ENCODE measurements at regions of chr16 and their contacts with region 1.

Region 1: GRCh38 chr16:27367461-27368357 is 34.3 kb upstream of the IL21R start:
- DNase-seq: peak in 9 of 10 donors; percentile 42 to 74 (median 57)
- H3K4me3 ChIP-seq: peak overlapping the region in 44 of 59 donors; percentile 6 to 52 (median 26)
- H3K27ac ChIP-seq: peak overlapping the region in 9 of 59 donors; percentile 13 to 58 (median 27)
- H3K27me3 ChIP-seq: no peaks in the 10 kb centered on the region
- CTCF ChIP-seq: peak; percentile 36 to 89 (median 76)

Region 2: DNA sequence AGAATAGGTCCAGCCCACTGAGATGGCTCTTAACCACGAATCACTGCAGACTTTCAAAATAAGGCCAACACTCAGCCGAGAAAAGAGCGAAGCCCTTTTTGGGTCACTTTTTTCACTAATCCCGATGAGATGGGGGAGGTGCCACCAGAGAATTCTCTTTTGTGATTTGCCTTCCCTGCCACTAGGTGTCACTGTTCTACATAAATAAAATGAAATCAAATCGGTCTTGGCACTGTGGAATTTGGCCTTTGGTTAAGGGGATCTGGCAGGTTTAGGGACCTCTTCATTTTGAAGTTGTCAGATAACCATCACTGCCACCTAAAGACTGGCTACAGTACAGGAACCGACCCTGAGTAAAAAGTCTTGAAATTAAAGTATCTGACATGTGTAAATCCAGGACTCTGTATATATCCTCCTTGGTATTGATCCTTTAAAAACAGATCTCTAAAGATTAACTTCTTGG is 1529.0 kb before region 1 on chr16:
- intact Hi-C with region 1: loop called in 1 of 2 experiments (anchors 10 kb)
- DNase-seq: peak in 2 of 10 donors; percentile 6 to 36
- H3K4me3 ChIP-seq: peak overlapping the region in 19 of 59 donors; percentile 3 to 49 (median 25)
- H3K27ac ChIP-seq: no peak overlapping the region
- H3K27me3 ChIP-seq: no peaks in the 10 kb centered on the region
- CTCF ChIP-seq: peak; percentile 70 to 90 (median 82)

Region 3: DNA sequence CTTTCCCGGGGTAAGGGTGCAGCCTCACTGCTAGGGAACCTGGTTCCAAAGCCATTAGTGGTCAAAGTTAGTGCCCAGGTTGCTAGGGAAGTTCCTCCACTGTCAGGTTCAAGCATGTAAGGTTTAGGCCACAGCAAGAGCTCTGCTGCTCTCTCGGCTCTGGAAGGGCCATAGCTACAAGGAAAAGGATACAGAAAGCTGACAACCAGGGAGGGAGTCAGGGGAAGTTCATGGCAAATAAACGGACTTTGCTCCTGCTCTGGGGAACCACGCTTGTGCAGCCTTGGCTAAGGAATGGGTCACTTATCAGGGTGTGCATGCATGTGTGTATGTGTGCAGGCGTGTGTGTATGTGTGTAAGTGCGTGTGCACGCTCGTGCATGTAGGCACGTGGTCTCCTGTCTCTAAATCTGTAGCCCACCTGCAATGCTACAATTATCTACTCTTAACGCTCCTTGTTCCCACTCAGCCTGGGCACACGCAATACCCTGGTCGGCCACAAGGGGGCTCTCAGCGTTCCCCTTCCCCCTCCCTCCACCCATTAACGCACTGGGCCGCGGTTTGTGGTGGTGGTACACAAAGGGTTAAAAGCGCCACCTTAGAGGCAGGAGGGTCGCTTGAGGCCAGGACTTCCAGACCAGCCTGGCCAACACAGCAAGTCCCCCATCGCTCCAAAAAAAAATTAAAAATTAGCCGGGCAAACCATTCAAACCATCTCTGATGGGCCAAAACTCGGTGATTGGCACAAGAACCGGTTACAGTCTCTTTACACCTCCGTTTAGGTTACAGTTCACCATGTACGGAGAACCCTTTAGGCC is 212.8 kb before region 1 on chr16:
- intact Hi-C with region 1: loop called in 1 of 2 experiments (anchors 5 kb)
- DNase-seq: peak in 8 of 10 donors; percentile 20 to 62 (median 46)
- H3K4me3 ChIP-seq: no peak overlapping the region
- H3K27ac ChIP-seq: no peak overlapping the region
- H3K27me3 ChIP-seq: no peaks in the 10 kb centered on the region
- CTCF ChIP-seq: peak; percentile 74 to 95 (median 89)

Region 4: GRCh38 chr16:27179500-27180072 is 188.1 kb before region 1 on chr16:
- intact Hi-C with region 1: loop called (anchors 2 to 10 kb)
- DNase-seq: peak in 9 of 10 donors; percentile 9 to 67 (median 55)
- H3K4me3 ChIP-seq: no peak overlapping the region
- H3K27ac ChIP-seq: no peak overlapping the region
- H3K27me3 ChIP-seq: peaks cover 0 to 12% (median 0%) of the 10 kb centered on the region in 45 donors
- CTCF ChIP-seq: peak; percentile 45 to 86 (median 76)

Region 5: DNA sequence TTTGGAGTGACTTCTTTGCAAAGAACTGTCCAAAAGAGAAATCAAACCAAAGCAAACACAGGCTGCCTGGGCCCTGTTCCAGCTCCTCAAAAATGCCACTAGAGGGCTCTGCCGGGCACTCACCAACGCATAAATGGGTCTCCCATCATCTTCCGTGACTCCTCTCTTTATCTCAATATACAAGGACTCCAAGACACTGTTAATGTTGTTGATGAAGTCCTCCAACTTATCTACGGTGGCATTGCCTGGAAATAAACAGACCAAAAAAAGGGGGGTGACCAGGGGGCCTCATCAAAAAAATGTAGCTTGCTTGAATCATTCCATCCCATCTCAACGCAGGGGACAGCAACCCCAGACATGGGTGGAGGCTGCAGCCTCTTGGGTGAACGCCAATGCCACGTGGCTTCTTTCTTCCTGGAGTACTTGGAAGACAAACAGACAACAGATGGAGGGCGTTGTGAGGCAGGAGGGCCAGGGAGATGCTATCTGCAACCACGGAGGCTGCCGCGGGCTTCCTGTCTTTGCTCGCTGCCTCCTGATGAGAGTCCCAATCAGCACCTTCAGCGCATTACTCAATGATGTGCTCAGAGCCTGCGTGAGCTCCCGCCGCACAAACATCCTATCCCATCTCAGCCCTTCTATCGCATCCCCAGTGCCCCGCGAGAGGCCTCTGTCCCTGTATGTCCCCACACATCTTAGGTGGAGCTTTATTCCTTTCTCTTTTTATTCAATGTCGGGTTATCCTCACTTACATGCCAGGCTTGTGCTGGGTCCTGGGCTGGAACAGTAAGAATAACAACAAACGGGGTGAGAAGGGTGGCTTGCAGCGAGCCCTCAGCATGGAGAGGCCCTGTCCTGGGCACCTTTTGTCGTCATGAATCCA is 132.4 kb before region 1 on chr16:
- intact Hi-C with region 1: loop called (anchors 2 to 5 kb)
- DNase-seq: peak; percentile 57 to 91 (median 74)
- H3K4me3 ChIP-seq: peak overlapping the region in 54 of 59 donors; percentile 4 to 61 (median 32)
- H3K27ac ChIP-seq: peak overlapping the region in 53 of 59 donors; percentile 9 to 80 (median 68)
- H3K27me3 ChIP-seq: no peaks in the 10 kb centered on the region
- CTCF ChIP-seq: peak; percentile 61 to 90 (median 80)

Region 6: GRCh38 chr16:27289669-27290068 is 78.0 kb before region 1 on chr16:
- intact Hi-C with region 1: no loop called
- DNase-seq: no peak
- H3K4me3 ChIP-seq: no peak overlapping the region
- H3K27ac ChIP-seq: no peak overlapping the region
- H3K27me3 ChIP-seq: no peaks in the 10 kb centered on the region
- CTCF ChIP-seq: no peak